Activated naive CD4-positive, alpha-beta T cell treated with anti-CD3 and anti-CD28 coated beads for 36 hours (primary cell): ENCODE measurements at regions of chr1 and their contacts with region 1.

Region 1: DNA sequence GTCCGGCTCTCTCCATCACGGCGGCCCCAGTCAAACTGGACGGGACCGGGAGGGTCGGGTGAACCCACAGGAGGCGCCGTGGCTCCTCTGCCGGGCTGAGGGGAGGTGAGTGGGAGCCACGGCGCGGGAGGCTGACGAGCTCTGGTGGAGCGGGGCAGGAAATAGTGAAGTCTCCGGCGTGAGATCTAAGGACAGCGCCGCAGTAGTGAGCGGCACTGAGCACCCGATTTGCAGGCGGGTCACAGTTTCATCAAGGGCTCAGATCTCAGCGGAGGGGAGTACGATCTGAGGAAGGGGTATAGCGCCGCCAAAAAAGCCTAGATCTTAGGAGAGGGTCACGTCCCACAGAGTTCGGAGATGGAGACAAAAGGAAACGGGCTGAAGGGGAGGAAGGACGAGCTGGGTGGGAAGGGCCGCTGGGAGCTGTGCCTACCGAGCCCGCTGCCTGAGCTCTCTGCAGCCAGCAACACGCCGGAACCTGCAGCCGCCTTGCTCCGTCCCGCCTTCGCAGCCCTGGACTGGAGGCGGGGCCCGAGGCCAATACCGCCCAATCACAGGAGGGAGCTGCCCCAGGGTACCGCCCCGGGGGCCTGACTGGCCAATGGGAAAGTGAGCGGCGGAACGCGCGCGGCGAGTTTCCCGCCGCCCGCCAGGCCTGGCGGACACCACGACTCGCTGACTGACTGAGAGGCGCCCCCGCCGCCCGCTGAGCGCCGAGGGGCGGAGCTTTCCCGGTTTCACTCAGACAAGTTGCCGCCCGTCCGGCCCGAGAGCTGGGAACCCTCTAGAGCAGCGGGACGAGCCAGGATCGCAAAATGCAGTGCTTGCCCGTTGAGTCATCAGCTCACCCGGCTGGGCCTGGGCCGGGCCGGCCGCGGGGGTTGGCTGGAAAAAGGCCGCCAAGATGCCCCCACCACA is 1.9 kb downstream of the SFN start:
- DNase-seq: peak; percentile 95
- H3K4me3 Mint-ChIP-seq: peak overlapping the region; percentile 92
- H3K27ac Mint-ChIP-seq: peak overlapping the region; percentile 90
- H3K4me1 Mint-ChIP-seq: peaks cover 21% of the 10 kb centered on the region
- H3K27me3 Mint-ChIP-seq: no peaks in the 10 kb centered on the region

Region 2: GRCh38 chr1:25031966-25032667 is 1832.8 kb before region 1 on chr1:
- CTCF ChIA-PET with region 1: no interaction called
- intact Hi-C with region 1: no loop called
- DNase-seq: peak; percentile 70
- H3K4me3 Mint-ChIP-seq: peak overlapping the region; percentile 81
- H3K27ac Mint-ChIP-seq: peak overlapping the region; percentile 99
- H3K4me1 Mint-ChIP-seq: peaks cover 75% of the 10 kb centered on the region
- H3K27me3 Mint-ChIP-seq: no peaks in the 10 kb centered on the region

Region 3: GRCh38 chr1:26695356-26696118 is 169.3 kb before region 1 on chr1 and contains the start of gene ARID1A:
- CTCF ChIA-PET with region 1: no interaction called
- intact Hi-C with region 1: loop called (anchors 2 kb)
- DNase-seq: peak; percentile 95
- H3K4me3 Mint-ChIP-seq: peak within 1 kb of the TSS; percentile 81
- H3K27ac Mint-ChIP-seq: peak within 1 kb of the TSS; percentile 91
- H3K4me1 Mint-ChIP-seq: peaks cover 22% of the 10 kb centered on the region
- H3K27me3 Mint-ChIP-seq: no peaks in the 10 kb centered on the region
- total RNA-seq, gene ARID1A: 65.0 to 65.9 TPM

Region 4: GRCh38 chr1:26705788-26706311 is 159.0 kb before region 1 on chr1:
- CTCF ChIA-PET with region 1: no interaction called
- intact Hi-C with region 1: no loop called
- DNase-seq: no peak
- H3K4me3 Mint-ChIP-seq: peak overlapping the region; percentile 7
- H3K27ac Mint-ChIP-seq: peak overlapping the region; percentile 20
- H3K4me1 Mint-ChIP-seq: peaks cover 41% of the 10 kb centered on the region
- H3K27me3 Mint-ChIP-seq: no peaks in the 10 kb centered on the region

Region 5: DNA sequence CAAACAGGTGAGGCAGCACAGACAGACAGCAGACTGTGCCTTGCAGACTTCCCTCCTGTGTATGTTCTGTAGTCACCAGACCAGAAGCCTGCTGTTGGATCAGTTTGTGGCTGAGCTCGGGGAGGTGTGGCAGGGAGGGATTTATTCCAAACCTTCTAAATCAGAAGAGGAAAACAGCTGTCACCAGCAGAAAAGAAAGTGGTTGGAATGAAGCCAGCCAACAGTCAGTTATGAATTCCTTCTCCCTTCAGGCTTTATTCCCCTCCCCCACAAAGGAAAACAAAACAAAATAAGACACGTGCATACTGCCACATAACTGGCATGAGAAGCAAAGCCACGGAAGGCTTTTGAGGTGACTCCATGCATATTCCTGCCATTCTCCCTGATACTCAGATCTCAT is 96.1 kb before region 1 on chr1:
- CTCF ChIA-PET with region 1: no interaction called
- intact Hi-C with region 1: no loop called
- DNase-seq: no peak
- H3K4me3 Mint-ChIP-seq: no peak overlapping the region
- H3K27ac Mint-ChIP-seq: peak overlapping the region; percentile 65
- H3K4me1 Mint-ChIP-seq: peaks cover 26% of the 10 kb centered on the region
- H3K27me3 Mint-ChIP-seq: no peaks in the 10 kb centered on the region

Region 6: DNA sequence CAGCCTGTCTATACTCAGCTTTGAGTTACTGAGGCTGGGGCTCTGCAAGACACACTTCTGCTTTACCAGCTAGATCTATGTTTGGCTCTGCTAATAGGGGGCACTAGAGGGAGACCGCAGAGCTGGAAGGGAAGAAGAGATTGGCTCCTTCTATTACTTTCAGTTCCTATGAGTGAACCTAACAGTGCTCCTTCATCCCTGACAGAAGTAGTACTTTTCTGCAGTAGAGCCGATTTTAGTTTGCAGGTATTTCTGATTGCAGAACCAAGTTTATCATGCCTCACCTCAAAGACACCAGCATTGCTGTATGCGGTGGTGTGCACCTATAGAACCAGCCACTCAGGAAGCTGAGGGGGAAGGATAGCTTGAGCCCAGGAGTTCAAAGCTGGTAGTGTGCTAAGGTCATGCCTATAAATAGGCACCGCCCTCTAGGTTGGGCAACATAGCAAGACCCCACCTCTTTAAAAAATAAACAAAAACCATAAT is 44.0 kb before region 1 on chr1:
- CTCF ChIA-PET with region 1: interaction called, 13 read pairs
- intact Hi-C with region 1: no loop called
- DNase-seq: peak; percentile 47
- H3K4me3 Mint-ChIP-seq: peak overlapping the region; percentile 52
- H3K27ac Mint-ChIP-seq: peak overlapping the region; percentile 51
- H3K4me1 Mint-ChIP-seq: peaks cover 21% of the 10 kb centered on the region
- H3K27me3 Mint-ChIP-seq: no peaks in the 10 kb centered on the region

Region 7: GRCh38 chr1:26833432-26834405 is 31.1 kb before region 1 on chr1:
- CTCF ChIA-PET with region 1: interaction called, 7 read pairs
- intact Hi-C with region 1: loop called (anchors 1 kb)
- DNase-seq: peak; percentile 96
- H3K4me3 Mint-ChIP-seq: peak overlapping the region; percentile 57
- H3K27ac Mint-ChIP-seq: peak overlapping the region; percentile 96
- H3K4me1 Mint-ChIP-seq: peaks cover 59% of the 10 kb centered on the region
- H3K27me3 Mint-ChIP-seq: no peaks in the 10 kb centered on the region

Region 8: DNA sequence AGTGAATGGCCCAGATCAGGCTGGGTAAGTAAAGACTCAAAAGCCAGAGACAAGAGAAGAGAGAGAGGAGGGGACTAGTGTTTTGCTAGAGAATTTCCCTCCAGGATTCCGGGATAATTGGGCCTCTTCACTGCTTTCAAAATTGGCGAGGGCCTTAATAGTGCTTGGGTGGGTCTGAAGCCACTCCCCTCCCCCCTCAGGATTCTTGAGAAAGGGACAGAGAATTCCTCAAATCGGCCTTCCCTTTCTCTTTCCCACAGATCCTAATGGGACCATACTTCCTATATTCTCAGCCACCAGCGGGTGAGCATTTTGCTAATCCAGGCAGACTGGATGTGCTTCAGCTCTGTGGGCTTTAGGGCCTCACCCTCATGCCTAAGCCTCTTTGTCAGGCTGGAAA is 10.0 kb after region 1 on chr1:
- CTCF ChIA-PET with region 1: interaction called, 15 read pairs
- intact Hi-C with region 1: no loop called
- DNase-seq: no peak
- H3K4me3 Mint-ChIP-seq: no peak overlapping the region
- H3K27ac Mint-ChIP-seq: no peak overlapping the region
- H3K4me1 Mint-ChIP-seq: peaks cover 2% of the 10 kb centered on the region
- H3K27me3 Mint-ChIP-seq: no peaks in the 10 kb centered on the region

Region 9: DNA sequence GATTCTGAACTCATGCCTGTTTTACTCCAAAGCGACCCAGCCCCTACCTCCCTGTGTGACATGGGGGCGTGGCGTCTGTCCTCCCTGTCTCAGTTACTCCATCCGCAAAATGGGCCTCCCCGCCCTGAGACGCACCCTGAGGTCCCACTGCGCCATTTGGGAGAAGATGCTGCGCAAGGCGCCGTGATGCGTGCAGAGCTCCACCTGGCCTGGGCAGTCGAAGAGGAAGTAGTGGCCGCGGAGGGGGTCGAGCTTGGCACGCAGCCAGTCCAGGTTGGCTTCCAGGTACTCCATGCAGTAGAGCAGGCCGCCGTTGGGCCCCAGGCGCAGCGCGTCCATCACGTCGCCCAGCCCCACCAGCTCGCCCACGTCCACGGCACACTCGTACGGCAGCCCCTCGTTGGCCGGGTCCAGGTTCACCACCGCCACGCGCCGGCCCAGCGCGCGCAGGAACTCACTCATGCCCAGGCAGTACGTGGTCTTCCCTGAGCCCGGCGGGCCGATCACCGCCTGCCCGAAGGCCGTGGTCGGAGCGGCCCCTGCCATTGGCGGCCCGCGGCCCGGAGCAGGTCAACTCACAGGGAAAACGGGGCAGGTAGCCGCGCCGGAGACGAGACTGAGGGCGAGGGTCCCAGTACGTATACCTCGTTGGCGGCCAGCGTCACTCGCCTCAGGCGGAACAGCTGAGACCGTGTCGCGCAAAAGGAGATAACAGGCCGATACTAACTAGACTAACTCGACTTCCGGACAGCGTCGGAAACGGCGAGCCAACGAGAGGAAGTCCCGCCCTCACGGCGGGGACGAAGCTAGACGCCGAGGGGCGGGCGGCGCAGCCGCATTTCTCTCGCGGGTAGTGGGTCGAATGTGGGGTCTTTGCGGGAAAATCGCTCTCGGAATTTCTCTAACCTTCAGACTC is 24.9 kb after region 1 on chr1 and contains the start of gene GPN2:
- CTCF ChIA-PET with region 1: interaction called, 11 read pairs
- intact Hi-C with region 1: loop called (anchors 2 kb)
- DNase-seq: peak; percentile 82
- H3K4me3 Mint-ChIP-seq: peak within 1 kb of the TSS; percentile 94
- H3K27ac Mint-ChIP-seq: peak within 1 kb of the TSS; percentile 91
- H3K4me1 Mint-ChIP-seq: peaks cover 30% of the 10 kb centered on the region
- H3K27me3 Mint-ChIP-seq: no peaks in the 10 kb centered on the region
- total RNA-seq, gene GPN2: 19.8 to 20.7 TPM

Region 10: DNA sequence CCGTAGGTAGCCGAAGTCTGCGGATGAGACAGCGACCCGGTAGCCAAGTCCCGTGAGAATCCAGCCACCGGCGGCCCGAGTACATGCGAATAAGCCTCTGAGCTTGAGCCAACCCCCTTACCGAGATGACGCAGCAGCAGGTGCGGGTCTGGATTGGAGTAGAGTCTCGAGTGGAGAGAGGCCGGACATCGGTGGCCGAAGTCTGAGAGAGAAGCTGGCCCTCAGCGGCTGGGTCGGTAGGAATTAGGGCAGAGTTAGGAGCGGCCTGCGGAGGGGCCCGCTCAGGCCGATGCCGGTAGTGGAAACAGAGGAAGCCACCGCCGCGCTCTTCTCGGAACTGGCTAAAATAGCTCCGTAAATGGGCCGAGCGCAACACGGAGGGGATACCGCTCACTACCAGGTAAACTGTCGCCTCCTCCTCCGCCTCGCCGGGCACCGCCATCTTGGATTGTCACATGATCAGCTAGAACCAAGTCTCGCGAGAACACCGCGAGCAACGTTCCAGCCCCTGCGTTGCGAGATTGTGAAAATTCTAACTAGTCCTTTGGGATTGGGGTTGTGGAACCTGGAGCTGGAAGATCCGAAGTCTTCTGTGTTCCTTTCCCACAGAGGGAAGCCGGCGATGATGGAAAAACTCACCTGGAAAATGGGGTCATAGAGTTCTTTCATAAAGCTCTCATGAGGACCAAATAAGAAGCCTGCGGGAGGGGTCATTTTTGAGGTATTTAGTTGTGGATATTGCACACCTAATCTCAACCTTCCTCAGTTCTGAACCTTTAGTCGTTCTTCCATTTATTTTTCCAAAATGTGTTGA is 35.3 kb after region 1 on chr1 and contains the start of gene GPATCH3:
- CTCF ChIA-PET with region 1: no interaction called
- intact Hi-C with region 1: no loop called
- DNase-seq: peak; percentile 95
- H3K4me3 Mint-ChIP-seq: peak within 1 kb of the TSS; percentile 97
- H3K27ac Mint-ChIP-seq: peak within 1 kb of the TSS; percentile 97
- H3K4me1 Mint-ChIP-seq: peaks cover 20% of the 10 kb centered on the region
- H3K27me3 Mint-ChIP-seq: no peaks in the 10 kb centered on the region
- total RNA-seq, gene GPATCH3: 7.9 to 8.5 TPM

Region 11: GRCh38 chr1:26921540-26922430 is 56.9 kb after region 1 on chr1 and contains the start of gene NUDC:
- CTCF ChIA-PET with region 1: no interaction called
- intact Hi-C with region 1: loop called (anchors 2 kb)
- DNase-seq: peak; percentile 98
- H3K4me3 Mint-ChIP-seq: peak within 1 kb of the TSS; percentile 99
- H3K27ac Mint-ChIP-seq: peak within 1 kb of the TSS; percentile 93
- H3K4me1 Mint-ChIP-seq: peaks cover 37% of the 10 kb centered on the region
- H3K27me3 Mint-ChIP-seq: no peaks in the 10 kb centered on the region
- total RNA-seq, gene NUDC: 75.3 to 78.1 TPM